ENCODE measurements at regions of chr9 and their contacts with region 1.

Region 1: DNA sequence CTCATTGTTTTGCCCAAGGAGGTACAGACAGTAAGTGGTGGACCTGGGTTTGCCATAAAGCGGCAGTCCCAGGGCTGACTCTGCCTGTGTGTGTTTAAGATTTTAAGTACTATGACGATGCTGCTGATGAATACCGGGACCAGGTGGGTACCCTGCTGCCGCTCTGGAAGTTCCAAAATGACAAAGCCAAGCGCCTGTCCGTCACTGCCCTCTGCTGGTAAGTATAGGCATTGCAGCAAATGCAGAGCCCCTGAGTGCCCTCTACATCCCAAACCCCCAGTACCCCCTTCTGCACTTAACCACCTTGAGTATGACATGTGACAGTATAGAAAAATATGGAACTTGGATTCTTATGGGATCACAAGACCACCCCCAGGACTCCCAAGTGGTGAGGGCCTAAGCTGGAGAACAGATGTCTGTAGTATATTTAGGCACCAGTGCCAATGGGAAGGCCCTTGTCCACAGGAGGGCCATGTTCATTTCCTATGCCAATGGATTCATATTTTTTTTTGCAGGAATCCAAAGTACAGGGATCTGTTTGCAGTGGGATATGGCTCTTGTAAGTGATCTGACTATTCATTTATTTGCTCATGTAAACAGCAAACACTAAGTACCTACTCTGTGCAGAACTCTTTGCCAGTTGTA is 22.0 kb downstream of the ENHO start:
- DNase-seq: peak; percentile 52 to 84 (median 73)
- ATAC-seq: peak; percentile 97
- H3K4me3 ChIP-seq: no peak overlapping the region
- H3K4me3 Mint-ChIP-seq: no peak overlapping the region
- H3K27ac ChIP-seq: no peak overlapping the region
- H3K27ac Mint-ChIP-seq: no peak overlapping the region
- H3K4me1 ChIP-seq: no peaks in the 10 kb centered on the region
- H3K4me1 Mint-ChIP-seq: no peaks in the 10 kb centered on the region
- H3K27me3 ChIP-seq: no peaks in the 10 kb centered on the region
- H3K27me3 Mint-ChIP-seq: peaks cover 10% of the 10 kb centered on the region
- CTCF ChIP-seq: peak; percentile 91

Region 2: DNA sequence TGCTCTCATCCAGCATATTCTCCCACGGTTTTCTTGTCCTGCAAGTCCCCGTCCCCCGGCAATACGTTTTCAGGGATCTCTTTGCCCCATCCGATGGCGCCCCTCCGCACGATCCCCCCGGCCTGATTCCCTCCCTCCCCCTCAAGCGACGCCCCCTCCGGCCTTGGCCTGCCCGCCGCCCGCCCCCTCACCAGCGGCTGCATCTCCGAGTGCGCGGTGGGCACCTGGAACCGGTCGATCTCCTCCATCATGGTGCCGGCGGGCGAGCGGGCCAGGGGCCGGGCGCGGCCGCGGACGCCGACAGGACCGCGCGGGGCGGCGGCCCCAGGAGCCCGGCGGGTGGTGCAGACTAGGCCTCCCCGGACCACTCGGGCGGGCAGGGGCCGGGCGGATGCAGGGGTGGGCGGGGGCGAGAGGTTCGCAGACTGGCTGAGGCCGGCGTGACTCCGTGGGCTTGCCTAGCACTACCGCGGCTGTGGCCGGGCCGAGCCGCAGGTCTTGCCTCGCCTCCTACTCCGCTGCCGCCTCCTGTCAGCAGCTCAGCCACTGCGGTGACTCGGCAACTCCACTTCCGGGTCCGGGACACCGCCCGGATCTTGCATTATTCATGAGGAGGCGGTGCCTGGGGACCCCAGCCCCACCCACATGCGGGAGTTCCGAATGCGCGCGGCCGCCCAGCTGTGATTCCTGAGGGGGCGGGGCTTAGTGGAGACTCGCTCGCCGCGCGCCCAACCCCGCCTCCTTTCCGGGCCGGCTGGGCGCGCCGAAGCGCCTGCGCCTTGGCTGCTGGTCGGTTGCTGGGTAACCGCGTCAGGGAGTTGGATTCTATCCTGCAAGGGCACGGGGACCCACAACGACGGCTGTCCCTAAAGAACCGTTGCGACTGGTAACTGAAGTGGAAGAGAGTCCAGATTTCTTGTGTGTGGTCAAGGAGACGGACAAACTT is 42.5 kb before region 1 on chr9 and contains the starts of genes DNAI1 and FAM219A:
- CTCF ChIA-PET with region 1: interaction called, 20 read pairs
- POLR2A ChIA-PET with region 1: no interaction called
- intact Hi-C with region 1: no loop called
- DNase-seq: peak; percentile 98 to 99 (median 99)
- ATAC-seq: peak; percentile 96
- H3K4me3 ChIP-seq: peak within 1 kb of the TSS; percentile 61 to 67
- H3K4me3 Mint-ChIP-seq: peak within 1 kb of the TSS; percentile 91
- H3K27ac ChIP-seq: peak within 1 kb of the TSS in 1 of 2 experiments; percentile 29
- H3K27ac Mint-ChIP-seq: peak within 1 kb of the TSS; percentile 46
- H3K4me1 ChIP-seq: peaks cover 14% of the 10 kb centered on the region
- H3K4me1 Mint-ChIP-seq: peaks cover 30% of the 10 kb centered on the region
- H3K27me3 ChIP-seq: no peaks in the 10 kb centered on the region
- H3K27me3 Mint-ChIP-seq: no peaks in the 10 kb centered on the region
- CTCF ChIP-seq: no peak
- total RNA-seq, gene DNAI1: not detected
- total RNA-seq, gene FAM219A: 5.5 to 5.9 TPM

Region 3: GRCh38 chr9:34513567-34514214 is 12.9 kb after region 1 on chr9:
- CTCF ChIA-PET with region 1: interaction called, 26 read pairs
- POLR2A ChIA-PET with region 1: no interaction called
- intact Hi-C with region 1: no loop called
- DNase-seq: no peak
- ATAC-seq: no peak
- H3K4me3 ChIP-seq: no peak overlapping the region
- H3K4me3 Mint-ChIP-seq: no peak overlapping the region
- H3K27ac ChIP-seq: no peak overlapping the region
- H3K27ac Mint-ChIP-seq: no peak overlapping the region
- H3K4me1 ChIP-seq: no peaks in the 10 kb centered on the region
- H3K4me1 Mint-ChIP-seq: no peaks in the 10 kb centered on the region
- H3K27me3 ChIP-seq: no peaks in the 10 kb centered on the region
- H3K27me3 Mint-ChIP-seq: peaks cover 3% of the 10 kb centered on the region
- CTCF ChIP-seq: no peak

Measured in CD8-positive, alpha-beta T cell (primary cell).